Common myeloid progenitor, CD34-positive (primary cell): ENCODE measurements at regions of chr14 and their contacts with region 1.

Region 1: DNA sequence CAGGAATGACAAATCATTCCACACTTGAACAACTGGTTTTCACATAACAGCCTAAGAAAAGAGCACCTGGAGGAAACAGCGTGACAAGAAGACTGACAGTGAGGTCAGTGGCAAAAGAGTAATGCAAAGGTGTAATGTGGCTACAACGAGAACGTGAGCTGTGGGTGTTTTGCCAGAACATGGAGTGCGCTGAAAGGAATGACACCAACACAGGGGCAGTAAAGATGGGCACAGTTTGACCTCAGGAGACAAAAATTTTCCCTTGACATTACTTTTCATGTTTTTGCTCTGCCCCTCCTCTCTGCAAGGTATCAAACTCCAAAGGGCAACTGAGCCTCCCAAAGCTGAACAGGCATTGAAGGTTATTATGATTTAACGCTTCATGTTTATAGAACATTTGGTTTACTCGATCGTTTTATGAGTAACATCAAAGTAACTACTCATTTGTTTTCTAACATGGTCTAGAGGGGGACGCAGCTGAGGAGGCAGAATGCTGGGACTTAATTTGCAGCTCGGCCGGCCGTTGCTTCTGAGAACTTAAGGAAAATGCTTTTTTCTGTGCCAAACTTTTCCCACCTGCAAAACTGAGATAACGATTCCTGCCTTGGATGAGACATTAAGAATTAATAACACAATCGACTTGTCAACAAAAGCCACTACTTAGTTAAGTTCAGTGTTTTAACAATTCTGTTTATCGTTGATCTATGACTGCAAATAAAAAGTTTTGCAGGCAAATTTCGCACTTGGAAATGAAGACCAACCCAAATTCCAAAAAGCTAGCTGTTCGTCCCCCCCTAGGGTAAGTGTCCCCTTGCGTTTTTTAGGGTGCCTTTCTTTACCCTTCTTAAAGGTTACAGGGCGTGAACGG is 954 bp downstream of the HAUS4 start:
- DNase-seq: peak in 2 of 3 donors; percentile 5 to 13
- H3K4me3 ChIP-seq: peak overlapping the region; percentile 73 to 95 (median 84)
- H3K27ac ChIP-seq: peak overlapping the region; percentile 33 to 85
- H3K4me1 ChIP-seq: peaks cover 3 to 24% (median 14%) of the 10 kb centered on the region in 4 experiments
- H3K27me3 ChIP-seq: no peaks in the 10 kb centered on the region

Region 2: DNA sequence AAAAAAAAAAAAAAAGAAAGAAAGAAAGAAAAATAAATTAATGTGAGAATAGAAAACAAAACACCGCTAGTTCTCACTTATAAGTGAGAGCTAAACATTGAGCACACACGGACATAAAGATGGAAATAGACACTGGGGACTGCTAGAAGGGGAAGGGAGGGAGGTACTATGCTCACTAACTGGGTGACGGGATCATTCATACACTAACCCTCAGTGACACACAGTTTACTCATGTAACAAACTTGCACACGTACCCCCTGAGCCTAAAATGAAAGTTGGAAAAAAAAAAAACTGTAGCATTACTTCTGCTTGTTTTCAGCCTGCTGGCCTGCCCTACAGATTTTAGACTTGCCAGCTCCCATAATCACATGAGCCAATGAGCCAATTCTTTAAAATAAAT is 16.3 kb before region 1 on chr14:
- CTCF ChIA-PET with region 1: interaction called, 12 read pairs
- POLR2A ChIA-PET with region 1: interaction called, 7 read pairs
- DNase-seq: no peak
- H3K4me3 ChIP-seq: no peak overlapping the region
- H3K27ac ChIP-seq: no peak overlapping the region
- H3K4me1 ChIP-seq: no peaks in the 10 kb centered on the region
- H3K27me3 ChIP-seq: no peaks in the 10 kb centered on the region

Region 3: DNA sequence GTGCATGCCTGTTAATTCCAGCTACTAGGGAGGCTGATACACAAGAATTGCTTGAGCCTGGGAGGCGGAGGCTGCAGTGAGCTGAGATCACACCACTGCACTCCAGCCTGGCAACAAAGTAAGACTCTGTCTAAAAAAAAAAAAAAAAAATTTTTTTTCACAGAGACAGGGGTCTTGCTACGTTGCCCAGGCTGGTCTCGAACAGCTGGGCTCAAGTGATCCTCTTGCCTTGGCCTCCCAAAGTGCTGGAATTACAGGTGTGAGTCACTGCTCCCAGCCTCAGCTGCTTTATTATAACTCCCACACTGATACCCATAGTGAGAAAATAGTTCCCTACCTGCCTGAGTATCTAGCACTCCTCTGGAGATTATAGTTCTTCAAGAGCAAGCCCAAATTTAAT is 10.3 kb before region 1 on chr14:
- CTCF ChIA-PET with region 1: interaction called, 12 read pairs
- POLR2A ChIA-PET with region 1: interaction called, 3 read pairs
- DNase-seq: no peak
- H3K4me3 ChIP-seq: no peak overlapping the region
- H3K27ac ChIP-seq: no peak overlapping the region
- H3K4me1 ChIP-seq: no peaks in the 10 kb centered on the region
- H3K27me3 ChIP-seq: no peaks in the 10 kb centered on the region